ENCODE measurements at regions of chr17 and their contacts with region 1.

Region 1: DNA sequence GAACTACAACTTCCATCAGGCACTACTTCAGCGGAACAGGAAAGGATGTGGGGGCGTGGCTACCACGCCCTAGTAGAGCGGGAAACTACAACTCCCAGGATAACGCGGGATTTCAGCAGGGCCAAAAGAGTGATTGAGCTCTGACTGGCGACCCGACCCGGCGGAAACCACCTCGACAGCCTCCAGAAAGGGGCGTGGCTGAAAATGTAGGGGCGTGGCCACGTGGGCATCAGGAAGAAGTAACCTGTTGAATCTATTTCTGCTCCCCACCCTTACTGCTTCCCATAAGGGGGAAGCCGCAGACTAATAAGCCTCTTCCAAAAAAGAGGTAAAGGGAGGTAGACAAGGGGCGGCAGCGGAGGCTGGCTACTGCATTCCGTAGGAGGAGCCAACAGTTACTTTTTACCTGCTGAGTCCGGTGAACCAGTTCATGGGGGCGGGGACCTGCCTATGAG is at the start of gene TMEM102:
- DNase-seq: peak; percentile 99
- H3K4me3 ChIP-seq: peak within 1 kb of the TSS; percentile 69
- H3K27ac ChIP-seq: peak within 1 kb of the TSS; percentile 91
- H3K4me1 ChIP-seq: peaks cover 18% of the 10 kb centered on the region
- H3K27me3 ChIP-seq: peaks cover 24% of the 10 kb centered on the region
- CTCF ChIP-seq: no peak
- total RNA-seq, gene TMEM102: 20.4 to 20.6 TPM

Region 2: DNA sequence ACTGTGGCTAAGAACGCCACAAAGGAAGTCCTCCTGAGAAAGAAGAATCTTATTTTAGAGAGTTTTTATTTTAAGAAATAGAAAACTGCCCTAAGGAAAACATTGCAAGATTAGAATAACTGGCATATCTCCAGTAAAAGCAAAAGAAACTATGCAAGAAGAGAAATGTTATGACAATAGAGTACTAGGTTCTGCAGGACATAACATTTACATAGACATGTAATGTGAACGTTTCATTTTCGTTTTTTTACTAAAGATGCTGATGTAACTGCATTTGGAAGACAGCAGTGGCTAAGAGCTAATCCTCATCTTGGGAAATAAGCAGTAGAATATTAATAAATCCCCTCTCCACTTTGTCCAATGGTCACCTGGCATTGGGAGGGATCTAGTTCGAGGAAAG is 312.9 kb before region 1 on chr17:
- intact Hi-C with region 1: no loop called
- DNase-seq: no peak
- H3K4me3 ChIP-seq: no peak overlapping the region
- H3K27ac ChIP-seq: no peak overlapping the region
- H3K4me1 ChIP-seq: no peaks in the 10 kb centered on the region
- H3K27me3 ChIP-seq: no peaks in the 10 kb centered on the region
- CTCF ChIP-seq: no peak

Region 3: DNA sequence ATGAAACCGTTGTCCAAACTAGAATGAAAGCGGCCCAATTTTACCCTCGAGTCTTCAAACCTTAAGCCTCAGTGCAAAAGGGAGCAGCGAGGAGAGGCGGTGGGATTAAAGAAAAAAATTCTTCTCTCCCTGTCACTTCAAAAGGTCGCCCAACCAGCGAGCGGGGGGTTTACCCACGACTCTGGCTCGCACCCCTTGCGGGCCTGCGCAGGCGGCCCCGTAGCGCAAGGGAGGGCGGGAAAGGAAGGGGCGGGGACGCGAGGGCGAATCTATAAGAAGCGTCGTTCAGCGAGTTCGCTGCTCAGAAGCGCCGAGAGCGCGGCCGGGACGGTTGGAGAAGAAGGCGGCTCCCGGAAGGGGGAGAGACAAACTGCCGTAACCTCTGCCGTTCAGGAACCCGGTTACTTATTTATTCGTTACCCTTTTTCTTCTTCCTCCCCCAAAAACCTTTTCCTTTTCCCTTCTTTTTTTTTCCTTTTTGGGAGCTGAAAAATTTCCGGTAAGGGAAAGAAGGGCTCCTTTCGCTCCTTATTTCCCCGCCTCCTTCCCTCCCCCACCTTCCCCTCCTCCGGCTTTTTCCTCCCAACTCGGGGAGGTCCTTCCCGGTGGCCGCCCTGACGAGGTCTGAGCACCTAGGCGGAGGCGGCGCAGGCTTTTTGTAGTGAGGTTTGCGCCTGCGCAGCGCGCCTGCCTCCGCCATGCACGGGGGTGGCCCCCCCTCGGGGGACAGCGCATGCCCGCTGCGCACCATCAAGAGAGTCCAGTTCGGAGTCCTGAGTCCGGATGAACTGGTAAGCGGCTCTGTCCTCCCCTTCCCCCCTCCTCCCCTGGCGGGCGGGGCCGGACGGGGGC is 49.0 kb after region 1 on chr17 and contains the start of gene POLR2A:
- intact Hi-C with region 1: loop called (anchors 2 kb)
- DNase-seq: peak; percentile 98
- H3K4me3 ChIP-seq: peak within 1 kb of the TSS; percentile 50
- H3K27ac ChIP-seq: peak within 1 kb of the TSS; percentile 93
- H3K4me1 ChIP-seq: peaks cover 22% of the 10 kb centered on the region
- H3K27me3 ChIP-seq: no peaks in the 10 kb centered on the region
- CTCF ChIP-seq: no peak
- total RNA-seq, gene POLR2A: 73.5 to 137 TPM

Region 4: DNA sequence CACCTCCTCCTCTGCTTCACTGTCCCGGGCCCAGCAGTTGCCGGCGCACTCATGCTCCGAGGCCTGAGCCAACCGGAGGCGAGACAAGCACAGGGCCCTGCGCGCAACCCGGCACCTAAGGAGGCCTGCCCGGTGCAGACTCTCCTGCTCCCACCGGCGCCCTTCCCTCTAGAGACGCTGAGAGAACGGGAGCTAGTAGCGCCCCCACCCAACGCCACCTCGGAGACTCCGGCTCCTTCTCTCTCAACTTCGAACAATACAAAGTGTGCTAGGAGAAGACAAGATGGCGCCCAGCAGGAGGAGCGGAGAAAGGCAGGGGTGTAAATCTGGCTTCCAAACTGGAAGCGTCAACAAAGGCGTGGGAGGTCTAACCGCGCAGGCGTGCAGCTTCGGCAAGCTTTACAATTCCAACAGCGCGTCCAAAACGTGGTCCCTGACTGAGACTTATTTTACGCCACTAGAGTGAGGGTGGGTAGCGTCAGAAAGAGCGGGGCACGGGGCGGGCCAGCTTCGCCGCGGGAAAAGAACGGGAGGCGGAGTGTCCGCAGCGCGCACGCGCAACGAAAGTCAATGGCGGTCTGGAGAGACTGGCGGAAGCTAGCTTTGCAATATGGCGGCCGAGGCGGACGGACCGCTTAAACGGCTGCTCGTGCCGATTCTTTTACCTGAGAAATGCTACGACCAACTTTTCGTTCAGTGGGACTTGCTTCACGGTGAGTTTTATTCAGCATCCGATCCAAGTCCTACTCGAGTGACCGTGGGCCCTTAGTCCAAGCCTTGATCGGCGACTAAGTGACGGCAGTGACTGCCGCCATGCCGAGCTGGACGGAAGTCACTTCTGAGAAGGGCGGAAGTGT is 148.2 kb after region 1 on chr17 and contains the start of gene MPDU1:
- intact Hi-C with region 1: loop called (anchors 10 kb)
- DNase-seq: peak; percentile 96
- H3K4me3 ChIP-seq: peak within 1 kb of the TSS; percentile 46
- H3K27ac ChIP-seq: peak within 1 kb of the TSS; percentile 87
- H3K4me1 ChIP-seq: peaks cover 3% of the 10 kb centered on the region
- H3K27me3 ChIP-seq: no peaks in the 10 kb centered on the region
- CTCF ChIP-seq: no peak
- total RNA-seq, gene MPDU1: 80.1 to 111 TPM